SK-N-SH (cell line): ENCODE measurements at regions of chr19 and their contacts with region 1.

Region 1: GRCh38 chr19:46840136-46840942 is 10.3 kb downstream of the AP2S1 start:
- DNase-seq: peak; percentile 83
- H3K4me3 ChIP-seq: peak overlapping the region in 1 of 2 experiments; percentile 33; a peak in 1 of 4 replicates
- H3K27ac ChIP-seq: peak overlapping the region; percentile 30 to 31
- H3K4me1 ChIP-seq: peaks cover 0 to 3% of the 10 kb centered on the region in 2 experiments; a peak in 1 of 4 replicates
- H3K27me3 ChIP-seq: no peaks in the 10 kb centered on the region
- CTCF ChIP-seq: peak; percentile 92
- EP300 ChIP-seq: no peak
- RAD21 ChIP-seq: peak; percentile 85

Region 2: GRCh38 chr19:46748325-46749109 is 91.8 kb before region 1 on chr19:
- CTCF ChIA-PET with region 1: interaction called, 170 read pairs
- POLR2A ChIA-PET with region 1: interaction called, 4 read pairs
- DNase-seq: peak; percentile 75
- H3K4me3 ChIP-seq: no peak overlapping the region; a peak in 1 of 4 replicates
- H3K27ac ChIP-seq: no peak overlapping the region
- H3K4me1 ChIP-seq: peaks cover 0 to 17% of the 10 kb centered on the region in 2 experiments; a peak in 1 of 4 replicates
- H3K27me3 ChIP-seq: no peaks in the 10 kb centered on the region
- CTCF ChIP-seq: peak; percentile 89
- EP300 ChIP-seq: no peak
- RAD21 ChIP-seq: peak; percentile 30; the same call in 1 of the 2 replicates

Region 3: GRCh38 chr19:46761418-46761831 is 78.9 kb before region 1 on chr19:
- CTCF ChIA-PET with region 1: interaction called, 170 read pairs
- POLR2A ChIA-PET with region 1: interaction called, 3 read pairs
- DNase-seq: no peak
- H3K4me3 ChIP-seq: no peak overlapping the region
- H3K27ac ChIP-seq: no peak overlapping the region
- H3K4me1 ChIP-seq: no peaks in the 10 kb centered on the region
- H3K27me3 ChIP-seq: no peaks in the 10 kb centered on the region
- CTCF ChIP-seq: no peak
- EP300 ChIP-seq: no peak
- RAD21 ChIP-seq: no peak

Region 4: DNA sequence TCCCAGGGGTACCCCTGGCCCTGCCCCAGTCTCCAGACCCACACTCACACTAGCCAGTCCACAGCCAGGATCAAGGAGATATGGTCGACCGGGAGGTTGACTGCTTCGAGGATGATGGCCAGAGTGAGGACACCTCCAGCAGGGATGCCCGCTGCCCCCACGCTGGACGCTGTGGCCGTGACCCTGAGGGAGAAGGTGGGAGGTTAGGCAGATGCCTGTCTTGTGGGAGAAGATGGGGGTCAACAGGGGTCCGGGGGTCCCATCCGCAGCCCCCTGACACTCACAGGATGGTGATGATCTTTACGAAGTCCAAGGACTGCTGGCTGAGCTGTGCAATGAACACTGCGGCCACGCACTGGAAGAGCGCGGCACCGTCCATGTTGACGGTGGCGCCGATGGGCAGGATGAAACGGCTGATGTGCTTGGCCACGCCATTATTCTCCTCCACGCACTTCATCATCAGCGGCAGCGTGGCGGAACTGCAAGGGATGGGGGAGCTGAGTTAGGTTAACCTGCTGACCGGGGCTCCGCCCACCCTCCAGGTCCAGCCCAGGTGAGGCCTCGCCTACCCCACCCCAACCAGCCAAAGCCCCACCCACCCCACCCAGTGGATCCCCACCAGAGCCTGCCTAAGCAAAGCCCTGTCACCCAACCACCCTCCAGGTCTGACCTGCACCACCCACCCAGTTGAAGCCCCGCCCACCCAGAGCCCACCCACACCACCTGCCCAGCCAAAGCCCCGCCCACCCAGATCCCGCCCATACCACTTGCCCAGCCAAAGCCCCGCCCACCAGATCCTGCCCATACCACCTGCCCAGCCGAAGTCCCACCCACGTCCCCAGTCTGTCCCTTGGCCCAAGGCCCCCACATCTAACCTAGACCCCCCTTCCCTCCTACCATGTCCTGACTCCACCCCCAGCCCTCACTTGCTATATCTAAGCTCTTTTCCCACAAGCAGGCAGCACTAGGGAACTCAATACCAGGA is 63.1 kb before region 1 on chr19:
- CTCF ChIA-PET with region 1: interaction called, 18 read pairs
- POLR2A ChIA-PET with region 1: no interaction called
- DNase-seq: peak; percentile 69
- H3K4me3 ChIP-seq: no peak overlapping the region
- H3K27ac ChIP-seq: no peak overlapping the region
- H3K4me1 ChIP-seq: no peaks in the 10 kb centered on the region
- H3K27me3 ChIP-seq: no peaks in the 10 kb centered on the region
- CTCF ChIP-seq: no peak
- EP300 ChIP-seq: no peak
- RAD21 ChIP-seq: no peak

Region 5: DNA sequence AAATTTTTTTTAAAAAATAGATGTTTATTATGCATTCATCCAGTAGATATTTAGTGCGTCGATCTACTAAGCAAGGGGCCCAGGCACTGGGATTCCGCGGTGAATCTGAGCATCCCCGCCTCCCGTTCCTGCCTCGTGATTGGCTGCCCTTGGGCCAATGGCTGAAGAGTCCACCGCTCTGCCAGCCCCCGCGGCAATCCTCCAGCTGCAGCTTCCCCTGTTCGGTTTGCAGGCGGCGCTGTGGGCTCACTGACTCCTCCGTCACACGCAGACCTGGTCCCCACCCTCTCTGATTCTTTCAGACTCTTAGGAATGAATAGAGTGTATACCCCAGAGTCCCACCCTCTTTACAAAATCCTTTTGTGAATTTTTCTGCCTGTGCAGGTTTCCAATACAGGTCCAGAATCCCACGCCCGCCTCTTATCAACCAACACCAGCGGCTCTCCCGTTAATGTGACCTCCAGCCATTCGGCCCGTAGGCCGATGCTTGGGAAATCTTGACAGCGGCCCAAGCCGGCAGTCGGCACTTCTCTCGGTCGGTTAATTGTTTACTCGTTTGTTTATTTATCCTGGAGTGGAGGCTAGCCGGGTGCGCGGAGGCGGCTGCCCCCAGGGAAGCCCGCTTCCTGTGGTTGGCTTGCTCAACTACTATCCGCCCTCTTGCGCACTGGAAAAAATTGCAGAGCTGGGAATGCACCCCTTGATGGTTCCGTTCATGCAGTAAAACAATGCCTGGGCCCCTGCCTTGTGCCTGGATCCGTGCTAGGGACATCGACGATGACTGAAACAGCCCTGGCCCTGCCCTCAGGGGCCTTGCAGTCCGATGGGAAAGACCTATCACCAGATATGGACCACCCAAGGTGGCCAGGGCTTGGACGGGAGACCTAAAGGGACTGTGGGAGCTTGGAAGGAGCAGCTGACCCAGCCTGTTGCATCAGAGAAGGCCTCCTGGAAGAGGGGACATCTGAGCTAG is 16.0 kb after region 1 on chr19:
- CTCF ChIA-PET with region 1: interaction called, 10 read pairs
- POLR2A ChIA-PET with region 1: no interaction called
- DNase-seq: peak; percentile 88
- H3K4me3 ChIP-seq: peak overlapping the region in 1 of 2 experiments; percentile 31; a peak in 2 of 4 replicates
- H3K27ac ChIP-seq: peak overlapping the region; percentile 4 to 21; a peak in 2 of 4 replicates
- H3K4me1 ChIP-seq: peaks cover 0 to 5% of the 10 kb centered on the region in 2 experiments; a peak in 2 of 4 replicates
- H3K27me3 ChIP-seq: no peaks in the 10 kb centered on the region
- CTCF ChIP-seq: peak; percentile 85
- EP300 ChIP-seq: no peak
- RAD21 ChIP-seq: peak; percentile 93